H1 (cell line): ENCODE measurements at regions of chr2 and their contacts with region 1.

Region 1: DNA sequence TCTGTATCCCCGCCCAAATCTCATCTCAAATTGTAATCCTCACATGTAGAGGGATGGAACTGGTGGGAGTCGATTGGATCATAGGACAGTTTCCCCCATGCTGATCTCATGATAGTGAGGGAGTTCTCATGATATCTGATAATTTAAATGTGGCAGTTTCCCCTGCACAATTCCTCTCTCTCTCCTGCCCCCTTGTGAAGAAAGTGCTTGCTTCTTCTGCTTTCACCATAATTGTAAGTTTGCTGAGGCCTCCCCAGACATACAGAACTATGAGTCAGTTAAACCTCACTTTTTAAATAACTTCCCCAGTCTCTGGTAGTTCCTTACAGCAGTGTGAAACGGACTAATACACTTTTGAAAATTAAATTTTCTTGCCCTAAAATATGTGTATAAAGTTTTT is 12.3 kb upstream of the KCNJ3 start:
- DNase-seq: no peak
- H3K4me3 ChIP-seq: no peak overlapping the region
- H3K27ac ChIP-seq: no peak overlapping the region
- H3K4me1 ChIP-seq: no peaks in the 10 kb centered on the region
- H3K27me3 ChIP-seq: no peaks in the 10 kb centered on the region
- CTCF ChIP-seq: peak in 2 of 3 experiments; percentile 52 to 62; a peak in 3 of 4 replicates
- EP300 ChIP-seq: no peak
- POLR2A ChIP-seq: no peak
- RAD21 ChIP-seq: peak; percentile 71 to 79

Region 2: DNA sequence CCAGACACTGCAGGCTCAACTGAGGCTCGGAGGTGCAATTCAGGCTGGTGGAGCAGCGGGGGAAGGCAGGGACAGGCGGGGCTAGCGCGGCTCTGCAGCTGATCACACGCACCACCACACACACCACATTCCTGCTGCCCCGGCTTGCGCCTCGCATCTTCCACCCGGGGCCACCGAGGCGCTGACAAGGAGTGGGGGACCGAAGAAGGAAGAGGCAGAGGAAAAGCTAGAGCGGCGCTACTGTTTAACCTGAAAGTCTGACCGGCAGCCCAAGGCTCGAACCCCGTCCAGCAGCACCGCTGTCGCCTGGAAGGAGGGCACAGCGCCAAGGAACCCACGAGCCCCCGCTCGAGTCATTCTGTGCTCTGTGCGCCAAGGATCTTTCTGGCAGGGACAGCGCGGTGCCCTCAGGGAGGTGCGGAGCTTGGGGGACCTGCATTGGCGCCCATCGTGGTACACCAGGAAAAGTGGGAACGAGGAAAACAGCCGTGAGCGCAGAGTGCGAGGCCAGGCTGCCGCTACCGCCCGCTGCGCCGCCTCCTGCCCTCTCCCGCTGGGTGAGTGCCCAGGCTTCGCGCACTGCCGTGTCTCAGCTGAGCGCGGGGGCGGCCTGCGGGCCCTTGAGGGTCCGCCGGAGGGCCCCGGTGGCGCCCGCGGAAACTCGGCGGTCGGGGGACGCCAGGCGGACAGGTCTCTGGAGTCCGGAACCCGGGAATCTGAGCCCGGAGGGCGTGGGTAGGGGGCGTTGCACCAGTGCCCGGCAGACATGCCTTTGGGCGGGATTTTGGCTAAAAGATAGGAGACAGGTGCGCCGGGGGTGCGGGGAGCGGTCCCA is 11.5 kb after region 1 on chr2:
- CTCF ChIA-PET with region 1: interaction called, 16 read pairs
- POLR2A ChIA-PET with region 1: no interaction called
- DNase-seq: peak in 1 of 2 experiments; percentile 76
- H3K4me3 ChIP-seq: peak overlapping the region; percentile 55 to 71 (median 58)
- H3K27ac ChIP-seq: no peak overlapping the region
- H3K4me1 ChIP-seq: peaks cover 0 to 5% (median 2%) of the 10 kb centered on the region in 4 experiments; a peak in 3 of 7 replicates
- H3K27me3 ChIP-seq: peaks cover 9 to 24% (median 18%) of the 10 kb centered on the region in 4 experiments
- CTCF ChIP-seq: no peak
- EP300 ChIP-seq: no peak
- POLR2A ChIP-seq: no peak
- RAD21 ChIP-seq: peak; percentile 1 to 2; a peak in 1 of 4 replicates